ENCODE measurements at regions of chr1 and their contacts with region 1.

Region 1: GRCh38 chr1:71510725-71511124 is 429.9 kb upstream of the ZRANB2 start:
- DNase-seq: no peak
- H3K4me3 Mint-ChIP-seq: no peak overlapping the region
- H3K27ac Mint-ChIP-seq: no peak overlapping the region
- H3K4me1 Mint-ChIP-seq: no peaks in the 10 kb centered on the region
- H3K27me3 Mint-ChIP-seq: no peaks in the 10 kb centered on the region
- CTCF ChIP-seq: no peak

Region 2: DNA sequence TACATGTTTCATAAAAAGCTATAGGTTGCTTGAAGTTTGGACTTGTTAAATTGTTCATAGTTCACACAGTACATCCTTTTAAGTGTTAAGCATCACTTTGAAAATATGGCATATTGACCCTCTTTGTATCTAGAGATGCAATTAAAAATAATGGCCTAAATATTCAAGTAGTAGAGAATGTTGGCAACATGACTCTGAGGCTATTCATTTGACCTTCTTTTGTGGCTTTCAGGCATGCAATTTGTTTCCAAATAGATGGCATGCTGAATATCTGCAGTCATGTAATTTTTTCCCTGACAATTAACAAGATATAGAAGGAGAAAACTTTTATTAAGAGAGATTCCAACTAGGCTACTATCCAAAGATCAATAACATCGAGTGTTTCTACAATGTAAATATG is 199.3 kb before region 1 on chr1:
- CTCF ChIA-PET with region 1: no interaction called
- intact Hi-C with region 1: loop called (anchors 5 kb)
- DNase-seq: no peak
- H3K4me3 Mint-ChIP-seq: no peak overlapping the region
- H3K27ac Mint-ChIP-seq: no peak overlapping the region
- H3K4me1 Mint-ChIP-seq: no peaks in the 10 kb centered on the region
- H3K27me3 Mint-ChIP-seq: no peaks in the 10 kb centered on the region
- CTCF ChIP-seq: no peak